MCF 10A (cell line): ENCODE measurements at regions of chr3 and their contacts with region 1.

Region 1: GRCh38 chr3:57227204-57227929 is at the start of gene APPL1:
- DNase-seq: peak; percentile 90
- H3K4me3 Mint-ChIP-seq: peak within 1 kb of the TSS; percentile 84
- H3K27ac Mint-ChIP-seq: peak within 1 kb of the TSS; percentile 75
- H3K4me1 Mint-ChIP-seq: peaks cover 11% of the 10 kb centered on the region
- H3K27me3 Mint-ChIP-seq: no peaks in the 10 kb centered on the region
- CTCF ChIP-seq: peak; percentile 5
- total RNA-seq, gene APPL1: 26.4 and 35.4 TPM in 2 replicates

Region 2: DNA sequence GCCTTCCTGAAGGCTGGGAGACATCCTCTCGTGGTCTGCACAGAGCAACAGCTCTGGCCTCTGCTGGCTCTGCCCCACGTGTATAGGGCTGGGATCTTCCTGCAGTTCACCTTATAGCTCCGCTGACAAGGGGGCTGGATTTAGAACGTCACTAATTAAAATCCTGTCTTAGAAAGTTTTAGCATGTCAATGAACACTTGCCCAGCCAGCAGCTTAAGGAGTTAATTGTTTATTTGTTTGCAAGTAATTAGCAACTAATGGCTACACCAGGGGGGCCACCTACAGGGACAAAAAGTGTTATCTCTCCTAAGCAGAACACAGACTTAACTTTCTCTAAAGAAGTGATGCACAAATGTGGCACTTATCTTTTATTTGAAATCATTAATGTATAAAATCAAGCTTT is 27.5 kb before region 1 on chr3 and contains the start of gene HESX1:
- CTCF ChIA-PET with region 1: interaction called, 5 read pairs
- POLR2A ChIA-PET with region 1: interaction called, 24 read pairs
- intact Hi-C with region 1: no loop called
- DNase-seq: no peak
- H3K4me3 Mint-ChIP-seq: no peak within 1 kb of the TSS
- H3K27ac Mint-ChIP-seq: no peak within 1 kb of the TSS
- H3K4me1 Mint-ChIP-seq: peaks cover 6% of the 10 kb centered on the region
- H3K27me3 Mint-ChIP-seq: no peaks in the 10 kb centered on the region
- CTCF ChIP-seq: no peak
- total RNA-seq, gene HESX1: 0.66 and 1.3 TPM in 2 replicates